ENCODE measurements at regions of chr21 and their contacts with region 1.

Region 1: DNA sequence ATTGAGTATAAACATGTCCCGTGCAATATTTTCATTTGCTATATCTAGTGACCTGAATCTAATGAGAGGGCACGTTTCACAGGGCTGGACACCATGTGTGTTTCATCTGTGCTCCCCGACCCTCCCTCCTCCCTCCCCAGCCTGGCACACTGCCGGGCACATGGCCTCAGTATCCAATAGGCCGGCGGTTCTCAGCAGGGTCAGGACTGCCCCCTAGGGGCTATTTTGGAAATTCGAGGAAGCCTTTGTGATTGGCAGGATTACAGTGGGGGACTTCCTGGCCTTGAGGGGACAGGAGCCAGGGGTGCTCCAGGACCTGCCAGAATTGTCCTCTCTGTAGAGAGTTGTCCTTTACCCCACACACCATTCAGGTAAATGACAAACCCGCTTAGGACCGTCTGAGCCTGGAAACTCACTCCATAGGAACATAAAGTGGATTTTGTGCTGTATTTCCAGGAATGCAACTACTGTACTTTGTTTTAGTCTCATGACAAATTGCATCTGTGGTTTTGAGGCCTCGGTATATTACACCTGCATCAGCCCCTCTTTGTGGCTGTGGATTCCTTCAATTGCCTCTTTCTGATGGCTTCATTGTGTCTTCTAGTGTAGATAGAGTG is 109.5 kb upstream of the SIM2 start:
- DNase-seq: peak; percentile 77 to 86 (median 79)
- ATAC-seq: peak; percentile 92 to 97 (median 96)
- H3K4me3 ChIP-seq: no peak overlapping the region
- H3K27ac ChIP-seq: no peak overlapping the region
- H3K4me1 ChIP-seq: no peaks in the 10 kb centered on the region
- H3K27me3 ChIP-seq: no peaks in the 10 kb centered on the region
- CTCF ChIP-seq: peak; percentile 66 to 77 (median 70)
- POLR2A ChIP-seq: no peak

Region 2: GRCh38 chr21:36419996-36420395 is 169.5 kb before region 1 on chr21:
- intact Hi-C with region 1: loop called (anchors 5 to 10 kb)
- DNase-seq: peak; percentile 78 to 85 (median 80)
- ATAC-seq: peak; percentile 91 to 94 (median 92)
- H3K4me3 ChIP-seq: no peak overlapping the region
- H3K27ac ChIP-seq: no peak overlapping the region
- H3K4me1 ChIP-seq: peaks cover 0 to 5% (median 0%) of the 10 kb centered on the region in 4 donors
- H3K27me3 ChIP-seq: no peaks in the 10 kb centered on the region
- CTCF ChIP-seq: peak; percentile 82 to 86 (median 82)
- POLR2A ChIP-seq: no peak

Region 3: DNA sequence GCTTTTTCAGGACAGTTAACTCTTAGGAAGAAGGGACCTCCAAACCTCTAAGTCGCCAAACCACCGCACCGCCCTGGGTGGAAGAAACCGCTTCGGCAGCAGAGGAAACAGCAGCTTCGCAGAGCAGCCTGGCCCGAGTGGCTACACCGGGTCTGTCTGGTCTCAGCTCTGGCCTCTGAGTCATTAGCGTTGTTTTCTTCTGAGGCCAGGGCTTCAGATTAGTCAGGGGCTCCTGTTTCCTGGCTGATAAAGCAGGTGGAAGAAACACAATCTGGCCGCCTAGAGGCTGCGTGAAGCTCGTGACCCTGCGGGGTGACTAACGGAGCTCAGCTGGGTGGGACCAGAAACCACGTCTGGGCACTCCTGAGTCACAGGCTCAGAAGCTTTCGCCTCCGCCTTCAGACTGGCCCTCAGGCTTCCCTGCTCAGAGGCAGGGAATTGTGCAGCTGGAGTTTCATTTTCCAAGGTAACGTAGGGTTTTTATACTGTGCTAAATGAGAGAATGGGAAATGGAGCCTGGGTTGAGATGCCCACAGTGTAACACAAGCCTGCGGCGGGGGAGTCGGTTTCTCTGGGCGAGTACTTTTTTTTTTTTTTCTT is 159.4 kb before region 1 on chr21:
- intact Hi-C with region 1: loop called in 1 of 2 experiments (anchors 10 kb)
- DNase-seq: peak; percentile 59 to 71 (median 70)
- ATAC-seq: peak; percentile 81 to 91 (median 88)
- H3K4me3 ChIP-seq: no peak overlapping the region
- H3K27ac ChIP-seq: peak overlapping the region; percentile 9 to 72 (median 24)
- H3K4me1 ChIP-seq: no peaks in the 10 kb centered on the region
- H3K27me3 ChIP-seq: no peaks in the 10 kb centered on the region
- CTCF ChIP-seq: no peak
- POLR2A ChIP-seq: peak; percentile 50

Region 4: GRCh38 chr21:36504067-36505058 is 85.1 kb before region 1 on chr21:
- intact Hi-C with region 1: loop called (anchors 5 kb)
- DNase-seq: no peak
- ATAC-seq: no peak
- H3K4me3 ChIP-seq: no peak overlapping the region
- H3K27ac ChIP-seq: no peak overlapping the region
- H3K4me1 ChIP-seq: peaks cover 0 to 19% (median 5%) of the 10 kb centered on the region in 4 donors
- H3K27me3 ChIP-seq: no peaks in the 10 kb centered on the region
- CTCF ChIP-seq: peak; percentile 91 to 96 (median 95)
- POLR2A ChIP-seq: no peak

Region 5: DNA sequence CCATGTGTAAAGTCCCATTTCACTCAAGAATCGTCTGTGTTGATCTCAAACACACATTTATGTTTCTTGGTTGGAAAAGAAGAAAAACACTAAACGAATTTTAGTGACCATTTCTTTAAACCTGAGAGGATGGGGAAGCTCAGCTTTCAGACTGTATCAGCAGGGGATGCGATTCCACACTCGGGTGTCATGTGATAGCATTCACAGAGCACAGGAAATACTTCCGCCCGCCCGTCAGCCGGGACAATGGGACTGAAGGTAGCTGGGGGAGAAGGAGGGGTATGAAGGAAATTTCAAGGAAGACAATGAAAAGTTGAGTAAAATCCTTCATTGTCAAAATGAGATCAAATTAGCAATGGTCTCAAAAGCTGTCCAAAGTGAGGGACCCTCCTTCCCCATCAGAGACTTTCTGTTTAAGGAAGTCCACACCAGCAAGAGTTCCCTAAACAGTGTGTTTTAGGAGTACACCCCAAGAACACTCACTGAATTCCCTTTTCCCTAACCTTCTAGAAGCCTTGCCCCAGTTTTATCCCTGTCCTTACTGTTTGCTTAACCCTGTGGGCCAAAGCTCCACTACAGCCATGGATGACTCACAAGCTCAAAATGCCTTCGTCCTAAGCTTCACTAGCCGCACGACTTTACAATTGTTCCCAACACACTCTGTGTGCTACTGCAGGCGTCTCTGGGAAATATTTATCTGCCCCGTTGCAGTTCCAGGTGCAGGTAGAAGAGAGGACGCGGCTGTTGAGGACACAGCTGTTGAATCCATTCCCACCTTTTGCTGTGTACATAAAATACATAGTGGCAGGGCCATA is 58.0 kb after region 1 on chr21:
- intact Hi-C with region 1: no loop called
- DNase-seq: peak in 1 of 3 donors; percentile 27
- ATAC-seq: peak; percentile 36 to 63 (median 44)
- H3K4me3 ChIP-seq: no peak overlapping the region
- H3K27ac ChIP-seq: no peak overlapping the region
- H3K4me1 ChIP-seq: no peaks in the 10 kb centered on the region
- H3K27me3 ChIP-seq: no peaks in the 10 kb centered on the region
- CTCF ChIP-seq: no peak
- POLR2A ChIP-seq: no peak